Activated CD8-positive, alpha-beta memory T cell treated with anti-CD3 and anti-CD28 coated beads, Interleukin-2, amount 10 ng/mL, durations not matched to agents 7 days and 5 days (primary cell): ENCODE measurements at regions of chr11 and their contacts with region 1.

Region 1: GRCh38 chr11:125592305-125593112 is at the start of gene STT3A:
- DNase-seq: peak; percentile 99
- ATAC-seq: peak; percentile 96
- H3K4me3 Mint-ChIP-seq: peak within 1 kb of the TSS; percentile 89
- H3K27ac Mint-ChIP-seq: peak within 1 kb of the TSS; percentile 95
- H3K4me1 Mint-ChIP-seq: peaks cover 42% of the 10 kb centered on the region
- H3K27me3 Mint-ChIP-seq: no peaks in the 10 kb centered on the region
- total RNA-seq, gene STT3A: 82.9 to 128 TPM

Region 2: GRCh38 chr11:125568970-125569914 is 23.3 kb before region 1 on chr11 and contains the start of gene EI24:
- CTCF ChIA-PET with region 1: interaction called, 11 read pairs
- DNase-seq: peak; percentile 92
- ATAC-seq: peak; percentile 98
- H3K4me3 Mint-ChIP-seq: peak within 1 kb of the TSS; percentile 89
- H3K27ac Mint-ChIP-seq: peak within 1 kb of the TSS; percentile 89
- H3K4me1 Mint-ChIP-seq: peaks cover 27% of the 10 kb centered on the region
- H3K27me3 Mint-ChIP-seq: no peaks in the 10 kb centered on the region
- total RNA-seq, gene EI24: 29.0 to 44.1 TPM

Region 3: GRCh38 chr11:125625630-125626287 is 33.2 kb after region 1 on chr11:
- CTCF ChIA-PET with region 1: interaction called, 15 read pairs
- DNase-seq: peak; percentile 91
- ATAC-seq: peak; percentile 91
- H3K4me3 Mint-ChIP-seq: peak overlapping the region; percentile 88
- H3K27ac Mint-ChIP-seq: peak overlapping the region; percentile 92
- H3K4me1 Mint-ChIP-seq: peaks cover 36% of the 10 kb centered on the region
- H3K27me3 Mint-ChIP-seq: no peaks in the 10 kb centered on the region